HCT116 (cell line): ENCODE measurements at regions of chr2 and their contacts with region 1.

Region 1: DNA sequence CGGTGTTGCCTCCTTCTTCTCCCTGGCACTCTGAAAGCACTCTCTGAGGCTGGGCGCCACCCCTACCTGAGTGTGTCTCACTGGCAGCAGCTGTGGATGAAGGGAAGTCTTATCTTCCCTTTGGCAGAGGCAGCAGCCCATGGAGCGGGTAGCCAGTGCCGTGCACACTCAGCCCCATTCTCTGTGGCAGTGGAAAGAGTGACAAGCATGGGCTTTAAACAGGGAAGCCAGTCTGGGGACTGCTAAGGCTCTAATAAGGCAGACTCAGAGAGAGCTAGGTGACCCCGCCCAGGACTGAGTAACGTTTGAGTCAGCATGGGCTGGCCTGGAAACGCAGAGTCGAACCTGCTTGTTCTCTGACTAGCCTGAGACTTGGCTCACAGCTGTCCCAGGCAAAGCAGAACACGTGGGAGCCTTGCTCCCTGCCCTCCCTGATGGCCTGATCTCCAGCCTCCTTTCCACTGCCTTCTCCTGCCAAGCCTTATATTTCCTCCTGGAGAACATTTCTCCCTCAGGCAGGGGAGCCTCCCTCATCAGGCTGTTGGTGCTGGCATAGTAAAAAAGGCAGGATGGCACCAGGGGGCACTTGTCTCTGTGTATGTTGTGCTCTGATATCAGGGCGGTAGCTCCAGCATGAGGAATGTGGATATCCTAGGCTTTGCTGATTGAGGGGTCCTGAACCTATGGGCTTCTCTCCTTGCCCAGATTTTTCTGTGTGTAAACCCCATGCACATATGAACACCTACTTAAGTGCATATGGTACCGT is 93.9 kb upstream of the LGALSL start:
- DNase-seq: peak; percentile 92
- ATAC-seq: peak; percentile 93
- H3K4me3 ChIP-seq: peak overlapping the region in 1 of 2 experiments; percentile 42; a peak in 2 of 4 replicates
- H3K27ac ChIP-seq: peak overlapping the region; percentile 38
- H3K4me1 ChIP-seq: peaks cover 22 to 60% of the 10 kb centered on the region in 2 experiments
- H3K27me3 ChIP-seq: no peaks in the 10 kb centered on the region
- CTCF ChIP-seq: peak in 2 of 3 experiments; percentile 29 to 42; a peak in 3 of 6 replicates
- POLR2A ChIP-seq: no peak
- RAD21 ChIP-seq: no peak

Region 2: GRCh38 chr2:64348386-64349130 is 11.5 kb before region 1 on chr2:
- CTCF ChIA-PET with region 1: interaction called, 3 read pairs
- POLR2A ChIA-PET with region 1: interaction called, 10 read pairs
- RAD21 ChIA-PET with region 1: no interaction called
- intact Hi-C with region 1: no loop called
- DNase-seq: no peak
- ATAC-seq: peak; percentile 50; the same call in 1 of the 2 replicates
- H3K4me3 ChIP-seq: no peak overlapping the region
- H3K27ac ChIP-seq: no peak overlapping the region
- H3K4me1 ChIP-seq: peaks cover 0 to 20% of the 10 kb centered on the region in 2 experiments; a peak in 2 of 4 replicates
- H3K27me3 ChIP-seq: no peaks in the 10 kb centered on the region
- CTCF ChIP-seq: no peak
- POLR2A ChIP-seq: no peak
- RAD21 ChIP-seq: no peak